ENCODE measurements at regions of chr1 and their contacts with region 1.

Region 1: DNA sequence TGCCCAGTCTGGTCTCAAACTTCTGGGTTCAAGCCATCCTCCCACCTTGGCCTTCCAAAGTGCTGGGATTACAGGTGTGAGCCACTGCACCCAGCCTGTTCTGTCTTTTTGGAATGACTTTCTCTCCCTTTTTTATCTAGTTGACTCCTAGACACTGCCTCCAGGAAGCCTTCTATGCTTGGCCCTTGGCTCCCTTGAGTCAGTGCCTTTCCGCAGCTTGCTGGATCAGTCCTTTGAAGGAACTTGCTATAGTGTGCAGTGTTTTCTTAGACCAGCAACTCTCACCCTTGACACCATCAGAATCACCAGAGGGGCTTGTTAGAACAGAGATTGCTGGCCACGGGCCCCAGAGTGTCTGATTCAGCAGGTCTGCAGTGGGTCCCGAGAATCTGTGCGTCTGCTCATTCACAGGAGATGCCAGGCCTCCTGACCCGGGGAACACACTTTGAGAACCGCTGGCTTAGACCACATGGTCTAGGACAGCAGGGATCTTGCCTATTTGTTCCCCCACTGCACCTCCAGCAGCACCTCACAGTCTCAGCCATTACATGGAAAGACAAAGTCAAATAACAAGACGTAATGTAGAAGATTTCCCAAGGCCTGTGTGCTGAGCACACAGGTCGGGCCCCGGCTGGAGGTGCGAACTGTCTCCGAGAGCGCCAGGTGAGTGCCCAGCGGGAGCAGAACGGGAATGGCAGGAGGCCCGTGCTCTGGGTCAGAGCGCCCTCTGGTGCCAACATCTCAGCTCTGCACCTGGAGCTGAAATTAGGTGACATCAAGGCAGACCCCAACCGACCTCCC is 27.4 kb upstream of the CTPS1 start:
- DNase-seq: peak; percentile 82
- CTCF ChIP-seq: peak; percentile 90

Region 2: GRCh38 chr1:39933956-39934941 is 1017.9 kb before region 1 on chr1:
- CTCF ChIA-PET with region 1: no interaction called
- POLR2A ChIA-PET with region 1: no interaction called
- DNase-seq: no peak
- CTCF ChIP-seq: no peak

Region 3: GRCh38 chr1:40612345-40612831 is 339.8 kb before region 1 on chr1:
- CTCF ChIA-PET with region 1: interaction called, 13 read pairs
- POLR2A ChIA-PET with region 1: no interaction called
- DNase-seq: peak; percentile 86
- CTCF ChIP-seq: peak; percentile 85

Region 4: DNA sequence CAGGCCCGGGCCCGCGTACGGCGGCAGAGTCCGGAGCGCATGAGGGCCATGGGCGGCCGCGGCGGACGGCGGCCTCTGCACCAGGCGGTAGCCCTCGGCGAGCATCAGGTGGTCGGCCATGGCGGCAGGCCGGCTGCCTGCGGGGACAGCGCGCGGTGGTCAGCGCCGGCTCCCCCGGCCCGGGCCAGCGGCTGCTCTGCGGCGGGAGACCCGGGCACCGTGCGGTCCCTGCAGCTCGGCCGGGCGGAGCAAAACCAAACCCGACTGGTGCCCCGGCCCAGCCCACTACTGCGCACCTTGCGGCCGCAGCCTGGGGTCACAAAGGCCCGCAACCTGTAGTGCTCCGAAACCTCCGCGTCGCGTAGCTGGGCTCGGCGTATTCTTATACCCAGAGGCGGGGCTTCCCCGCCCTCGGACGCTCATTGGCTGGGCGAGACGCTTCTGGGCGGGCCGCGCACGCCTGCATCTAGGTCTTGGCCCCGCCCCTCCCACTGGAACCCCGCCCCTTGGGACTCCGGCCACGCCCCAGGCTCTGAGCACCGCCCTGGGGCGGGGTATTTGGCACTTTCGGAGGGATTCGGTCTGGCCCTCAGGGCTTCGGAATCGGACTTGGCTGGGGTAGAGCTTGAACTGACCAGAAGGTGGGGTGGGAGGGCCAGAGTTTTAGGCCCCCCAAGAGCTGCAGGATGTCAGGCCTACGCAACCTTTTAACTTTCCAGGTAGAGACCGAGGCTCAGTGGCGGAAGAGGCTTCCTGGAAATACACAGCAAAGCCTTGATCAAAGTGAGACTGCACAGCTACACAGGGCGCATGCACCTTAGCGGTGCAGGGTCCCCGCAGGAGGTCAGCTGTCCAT is 89.9 kb before region 1 on chr1 and contains the start of gene CITED4:
- CTCF ChIA-PET with region 1: interaction called, 26 read pairs
- POLR2A ChIA-PET with region 1: no interaction called
- DNase-seq: peak; percentile 98
- CTCF ChIP-seq: peak; percentile 2

Region 5: GRCh38 chr1:40926441-40926840 is 25.7 kb before region 1 on chr1:
- CTCF ChIA-PET with region 1: interaction called, 47 read pairs
- POLR2A ChIA-PET with region 1: no interaction called
- DNase-seq: no peak
- CTCF ChIP-seq: no peak

Region 6: DNA sequence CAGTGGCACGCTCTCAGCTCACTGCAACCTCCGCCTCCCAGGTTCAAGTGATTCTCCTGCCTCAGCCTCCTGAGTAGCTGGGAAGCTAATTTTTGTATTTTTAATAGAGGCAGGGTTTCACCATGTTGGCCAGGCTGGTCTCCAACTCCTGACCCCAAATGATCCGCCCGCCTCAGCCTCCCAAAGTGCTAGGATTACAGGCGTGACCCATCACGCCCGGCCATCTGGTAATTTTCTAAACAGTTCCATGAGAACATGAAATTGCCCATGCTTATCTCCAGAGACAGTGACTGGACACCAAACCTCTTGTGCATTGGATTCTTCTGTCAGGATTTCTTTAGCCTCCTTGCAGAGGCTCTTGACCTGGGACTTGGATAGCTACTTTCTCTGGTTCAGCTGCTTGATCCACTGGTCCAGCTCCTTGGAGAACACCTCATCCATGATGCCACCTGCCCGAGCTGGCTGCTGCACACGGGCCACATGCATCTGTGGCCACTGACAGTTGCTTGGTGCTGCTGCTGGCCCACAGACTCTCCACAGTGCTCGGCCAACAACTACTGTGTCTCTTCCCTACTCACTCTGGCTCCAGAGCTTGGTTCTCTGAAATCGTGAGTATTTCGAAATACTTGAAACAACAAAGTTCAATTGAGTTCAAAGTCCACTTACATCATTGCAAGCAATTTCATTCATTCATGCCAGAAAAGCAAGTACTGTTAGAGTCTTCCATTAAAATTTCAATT is 12.7 kb before region 1 on chr1:
- CTCF ChIA-PET with region 1: interaction called, 144 read pairs
- POLR2A ChIA-PET with region 1: no interaction called
- DNase-seq: no peak
- CTCF ChIP-seq: no peak

Region 7: DNA sequence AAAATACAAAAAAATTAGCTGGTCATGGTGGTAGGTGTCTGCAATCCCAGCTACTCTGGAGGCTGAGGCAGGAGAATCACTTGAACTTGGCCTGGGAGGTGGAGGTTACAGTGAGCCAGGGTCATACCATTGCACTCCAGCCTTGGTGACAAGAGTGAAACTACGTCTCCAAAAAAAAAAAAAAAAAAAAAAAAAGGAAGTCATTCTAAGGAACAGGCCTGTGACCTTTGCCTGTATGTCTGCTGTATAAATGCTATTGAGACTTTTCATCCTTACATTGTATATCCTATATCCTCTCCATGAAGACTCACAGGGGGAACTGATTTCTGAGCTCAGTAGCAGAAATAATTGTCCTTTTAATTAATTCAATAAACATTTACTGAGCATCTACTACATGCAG is 19.8 kb after region 1 on chr1:
- CTCF ChIA-PET with region 1: interaction called, 15 read pairs
- POLR2A ChIA-PET with region 1: no interaction called
- DNase-seq: no peak
- CTCF ChIP-seq: no peak

Region 8: DNA sequence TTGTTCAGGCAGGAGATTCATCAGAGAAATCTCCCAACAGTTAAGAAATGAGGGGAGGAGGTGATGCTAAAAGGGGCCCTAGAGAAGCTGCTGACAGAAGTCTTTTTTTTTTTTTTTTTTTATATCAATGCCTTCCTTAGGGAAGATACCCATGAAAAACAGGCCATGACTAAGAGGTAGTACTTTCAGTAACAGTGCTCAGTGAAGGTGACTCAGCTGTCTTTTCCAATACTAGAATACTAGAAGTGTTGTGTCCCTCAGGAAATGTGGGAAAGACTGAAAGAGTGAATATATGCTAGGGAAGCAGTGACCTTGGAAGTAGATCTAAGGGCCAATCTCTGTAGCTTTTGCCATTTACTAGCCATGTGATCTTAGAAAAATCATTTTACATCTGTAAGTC is 121.8 kb after region 1 on chr1:
- CTCF ChIA-PET with region 1: no interaction called
- POLR2A ChIA-PET with region 1: no interaction called
- DNase-seq: no peak
- CTCF ChIP-seq: no peak

Measured in GM10248 (cell line).